Activated CD8-positive, alpha-beta T cell treated with anti-CD3 and anti-CD28 coated beads for 36 hours (primary cell): ENCODE measurements at regions of chr9 and their contacts with region 1.

Region 1: GRCh38 chr9:98207606-98208005 is 15.2 kb upstream of the CORO2A start:
- DNase-seq: no peak
- ATAC-seq: no peak
- H3K4me3 Mint-ChIP-seq: no peak overlapping the region
- H3K27ac Mint-ChIP-seq: no peak overlapping the region
- H3K4me1 Mint-ChIP-seq: no peaks in the 10 kb centered on the region
- H3K27me3 Mint-ChIP-seq: no peaks in the 10 kb centered on the region
- CTCF ChIP-seq: no peak

Region 2: DNA sequence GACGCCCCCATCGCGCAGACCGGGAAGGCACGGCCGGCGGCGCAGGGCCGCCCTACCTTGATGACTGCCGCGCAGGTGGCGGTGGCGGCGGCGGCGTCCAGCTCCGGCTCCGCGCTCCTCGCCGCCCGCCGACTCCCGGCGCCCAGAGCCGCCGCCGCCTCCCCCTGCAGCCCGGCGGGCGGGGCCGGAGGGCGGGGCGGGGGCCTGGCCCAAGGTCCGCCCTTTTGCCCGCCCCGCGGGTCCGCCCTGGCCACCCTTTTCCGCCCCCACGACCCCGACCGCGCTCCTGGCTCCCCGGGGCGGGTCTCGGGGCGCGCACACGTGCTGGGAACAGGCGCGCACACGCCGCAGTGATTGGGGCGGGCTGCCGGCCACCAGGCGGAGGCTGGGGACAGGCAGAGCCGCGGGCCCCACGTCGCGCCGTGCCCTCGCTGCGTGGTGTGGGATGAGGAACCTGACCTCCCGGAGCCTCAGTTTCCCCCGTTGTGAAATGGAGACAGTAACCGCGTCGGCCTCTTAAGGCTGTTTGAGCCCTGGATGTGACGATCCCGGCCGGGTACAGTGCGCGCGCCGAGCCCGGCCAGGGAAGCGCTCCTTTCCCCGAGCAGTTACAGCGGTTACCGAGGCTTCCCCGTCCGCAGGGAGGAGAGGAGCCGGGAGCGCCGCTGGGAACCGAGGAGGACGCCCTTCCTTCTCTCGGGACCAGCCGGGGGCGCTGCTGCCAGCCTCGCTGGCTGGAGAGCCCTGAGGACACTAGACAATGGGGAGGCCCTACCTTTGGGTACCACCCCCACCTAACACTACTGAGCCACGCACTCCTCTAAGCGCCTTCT is 14.9 kb before region 1 on chr9 and contains the start of gene CORO2A:
- CTCF ChIA-PET with region 1: interaction called, 31 read pairs
- POLR2A ChIA-PET with region 1: interaction called, 3 read pairs
- intact Hi-C with region 1: no loop called
- DNase-seq: peak; percentile 81
- ATAC-seq: peak; percentile 80
- H3K4me3 Mint-ChIP-seq: peak within 1 kb of the TSS; percentile 81
- H3K27ac Mint-ChIP-seq: peak within 1 kb of the TSS; percentile 49
- H3K4me1 Mint-ChIP-seq: peaks cover 32% of the 10 kb centered on the region
- H3K27me3 Mint-ChIP-seq: no peaks in the 10 kb centered on the region
- CTCF ChIP-seq: peak; percentile 25
- total RNA-seq, gene CORO2A: 12.2 to 13.4 TPM

Region 3: GRCh38 chr9:98218562-98219363 is 11.2 kb after region 1 on chr9:
- CTCF ChIA-PET with region 1: interaction called, 18 read pairs
- POLR2A ChIA-PET with region 1: interaction called, 4 read pairs
- intact Hi-C with region 1: no loop called
- DNase-seq: no peak
- ATAC-seq: no peak
- H3K4me3 Mint-ChIP-seq: no peak overlapping the region
- H3K27ac Mint-ChIP-seq: no peak overlapping the region
- H3K4me1 Mint-ChIP-seq: no peaks in the 10 kb centered on the region
- H3K27me3 Mint-ChIP-seq: no peaks in the 10 kb centered on the region
- CTCF ChIP-seq: no peak

Region 4: GRCh38 chr9:98234245-98234825 is 26.7 kb after region 1 on chr9:
- CTCF ChIA-PET with region 1: interaction called, 10 read pairs
- POLR2A ChIA-PET with region 1: no interaction called
- intact Hi-C with region 1: no loop called
- DNase-seq: no peak
- ATAC-seq: no peak
- H3K4me3 Mint-ChIP-seq: no peak overlapping the region
- H3K27ac Mint-ChIP-seq: no peak overlapping the region
- H3K4me1 Mint-ChIP-seq: no peaks in the 10 kb centered on the region
- H3K27me3 Mint-ChIP-seq: no peaks in the 10 kb centered on the region
- CTCF ChIP-seq: no peak

Region 5: GRCh38 chr9:98255578-98256296 is 48.1 kb after region 1 on chr9 and contains the start of gene TBC1D2:
- CTCF ChIA-PET with region 1: interaction called, 18 read pairs
- POLR2A ChIA-PET with region 1: interaction called, 4 read pairs
- intact Hi-C with region 1: no loop called
- DNase-seq: peak; percentile 97
- ATAC-seq: peak; percentile 93
- H3K4me3 Mint-ChIP-seq: peak within 1 kb of the TSS; percentile 85
- H3K27ac Mint-ChIP-seq: peak within 1 kb of the TSS; percentile 97
- H3K4me1 Mint-ChIP-seq: peaks cover 16% of the 10 kb centered on the region
- H3K27me3 Mint-ChIP-seq: no peaks in the 10 kb centered on the region
- CTCF ChIP-seq: peak; percentile 18
- total RNA-seq, gene TBC1D2: 1.5 TPM

Region 6: DNA sequence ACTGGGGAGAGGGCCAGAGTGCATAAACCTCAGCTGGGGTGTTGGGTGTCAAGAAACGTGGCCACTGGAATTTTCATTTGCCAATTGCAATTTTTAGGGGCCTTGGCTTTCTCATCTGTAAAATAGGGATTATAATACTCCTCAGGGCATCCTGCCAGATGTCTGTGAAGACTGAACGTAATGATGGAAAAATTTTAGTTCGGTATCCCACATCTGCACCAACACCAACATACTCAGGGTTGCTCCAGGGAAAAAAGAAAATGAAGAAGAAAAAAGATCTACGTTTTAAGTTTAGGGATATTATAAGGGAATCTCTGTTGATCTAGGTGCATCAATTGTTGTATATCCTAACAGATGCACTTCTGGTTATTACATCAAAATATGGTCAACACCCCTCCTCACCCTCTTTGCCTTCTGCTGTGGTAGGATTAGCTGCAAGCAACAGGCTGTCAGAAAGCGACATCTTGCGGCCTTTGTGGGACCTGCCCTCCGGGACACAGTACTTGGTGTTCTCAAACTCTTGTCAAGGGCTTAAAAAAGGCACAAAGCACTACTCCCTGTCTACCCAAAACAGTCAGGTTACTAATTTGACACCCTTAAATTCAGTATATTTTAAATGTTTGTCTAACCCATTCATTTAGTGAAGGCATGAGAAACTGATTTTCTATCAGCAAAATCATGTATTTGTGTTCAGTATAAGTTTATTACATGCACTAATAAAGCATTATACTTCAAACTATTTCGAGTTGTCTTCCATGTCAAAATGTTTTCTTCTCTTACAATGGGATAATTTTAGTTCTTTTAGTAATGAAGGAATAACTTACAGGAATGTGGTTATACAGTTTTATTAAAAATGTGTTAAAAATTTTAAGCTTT is 56.1 kb after region 1 on chr9:
- CTCF ChIA-PET with region 1: interaction called, 29 read pairs
- POLR2A ChIA-PET with region 1: no interaction called
- intact Hi-C with region 1: loop called (anchors 2 kb)
- DNase-seq: peak; percentile 89
- ATAC-seq: peak; percentile 99
- H3K4me3 Mint-ChIP-seq: no peak overlapping the region
- H3K27ac Mint-ChIP-seq: no peak overlapping the region
- H3K4me1 Mint-ChIP-seq: no peaks in the 10 kb centered on the region
- H3K27me3 Mint-ChIP-seq: no peaks in the 10 kb centered on the region
- CTCF ChIP-seq: peak; percentile 82